CD8-positive, alpha-beta T cell (primary cell): ENCODE measurements at regions of chr15 and their contacts with region 1.

Region 1: DNA sequence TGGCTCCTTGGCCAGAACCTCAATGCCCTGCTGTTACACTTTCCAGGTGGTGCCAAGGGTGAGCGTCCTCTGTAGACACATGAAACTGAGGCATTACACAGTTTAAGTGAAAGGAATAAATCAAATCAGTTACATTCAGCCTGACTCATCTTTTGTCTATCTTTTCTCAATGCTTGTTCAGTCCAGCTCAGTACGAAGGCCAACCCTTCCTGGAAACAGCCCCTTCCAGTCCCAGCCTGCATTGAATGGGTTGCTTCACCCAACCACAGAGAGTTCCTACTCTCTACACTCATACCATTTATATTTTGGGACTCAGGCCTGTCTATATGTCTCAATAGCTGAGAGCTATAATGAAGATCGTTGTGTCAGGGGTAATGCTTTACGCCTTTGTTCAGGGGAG is 363.6 kb downstream of the RORA start:
- DNase-seq: no peak
- ATAC-seq: no peak
- H3K4me3 ChIP-seq: no peak overlapping the region
- H3K4me3 Mint-ChIP-seq: no peak overlapping the region
- H3K27ac ChIP-seq: no peak overlapping the region
- H3K27ac Mint-ChIP-seq: no peak overlapping the region
- H3K4me1 ChIP-seq: peaks cover 7% of the 10 kb centered on the region
- H3K4me1 Mint-ChIP-seq: peaks cover 26% of the 10 kb centered on the region
- H3K27me3 ChIP-seq: no peaks in the 10 kb centered on the region
- H3K27me3 Mint-ChIP-seq: no peaks in the 10 kb centered on the region
- CTCF ChIP-seq: no peak

Region 2: GRCh38 chr15:60580650-60581376 is 284.7 kb before region 1 on chr15:
- CTCF ChIA-PET with region 1: interaction called, 71 read pairs
- POLR2A ChIA-PET with region 1: interaction called, 9 read pairs
- intact Hi-C with region 1: loop called (anchors 1 to 2 kb)
- DNase-seq: peak in 6 of 9 experiments; percentile 33 to 91 (median 60)
- ATAC-seq: peak; percentile 74
- H3K4me3 ChIP-seq: peak overlapping the region; percentile 18 to 21
- H3K4me3 Mint-ChIP-seq: peak overlapping the region; percentile 74
- H3K27ac ChIP-seq: peak overlapping the region; percentile 35 to 85
- H3K27ac Mint-ChIP-seq: peak overlapping the region; percentile 95
- H3K4me1 ChIP-seq: peaks cover 91% of the 10 kb centered on the region
- H3K4me1 Mint-ChIP-seq: peaks cover 92% of the 10 kb centered on the region
- H3K27me3 ChIP-seq: no peaks in the 10 kb centered on the region
- H3K27me3 Mint-ChIP-seq: no peaks in the 10 kb centered on the region
- CTCF ChIP-seq: no peak

Region 3: GRCh38 chr15:60673918-60674558 is 191.5 kb before region 1 on chr15:
- CTCF ChIA-PET with region 1: interaction called, 27 read pairs
- POLR2A ChIA-PET with region 1: interaction called, 3 read pairs
- intact Hi-C with region 1: loop called in 1 of 2 experiments (anchors 2 kb)
- DNase-seq: peak in 2 of 9 experiments; percentile 15 to 22
- ATAC-seq: no peak
- H3K4me3 ChIP-seq: no peak overlapping the region
- H3K4me3 Mint-ChIP-seq: no peak overlapping the region
- H3K27ac ChIP-seq: no peak overlapping the region
- H3K27ac Mint-ChIP-seq: no peak overlapping the region
- H3K4me1 ChIP-seq: no peaks in the 10 kb centered on the region
- H3K4me1 Mint-ChIP-seq: peaks cover 2% of the 10 kb centered on the region
- H3K27me3 ChIP-seq: no peaks in the 10 kb centered on the region
- H3K27me3 Mint-ChIP-seq: no peaks in the 10 kb centered on the region
- CTCF ChIP-seq: no peak

Region 4: DNA sequence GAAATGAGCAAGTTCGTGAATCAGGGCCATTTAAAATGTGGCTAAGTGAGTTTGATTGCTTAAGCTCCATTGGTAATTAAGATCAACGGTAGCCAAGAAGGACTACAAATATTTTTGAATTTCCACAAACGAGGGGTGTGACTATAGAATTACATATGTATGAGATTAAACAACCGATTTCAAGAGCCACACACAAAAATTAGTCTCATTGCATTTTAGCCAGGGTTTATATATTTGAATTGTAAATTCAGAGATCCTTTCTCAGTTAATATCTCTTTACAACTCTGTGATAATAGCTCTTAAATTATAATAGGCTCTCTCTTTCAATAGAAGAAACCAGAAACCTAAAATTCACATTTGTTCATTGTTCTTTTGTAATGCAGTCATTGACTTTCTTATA is 61.0 kb before region 1 on chr15:
- CTCF ChIA-PET with region 1: no interaction called
- POLR2A ChIA-PET with region 1: no interaction called
- intact Hi-C with region 1: no loop called
- DNase-seq: no peak
- ATAC-seq: no peak
- H3K4me3 ChIP-seq: no peak overlapping the region
- H3K4me3 Mint-ChIP-seq: no peak overlapping the region
- H3K27ac ChIP-seq: no peak overlapping the region
- H3K27ac Mint-ChIP-seq: no peak overlapping the region
- H3K4me1 ChIP-seq: peaks cover 62% of the 10 kb centered on the region
- H3K4me1 Mint-ChIP-seq: peaks cover 67% of the 10 kb centered on the region
- H3K27me3 ChIP-seq: no peaks in the 10 kb centered on the region
- H3K27me3 Mint-ChIP-seq: no peaks in the 10 kb centered on the region
- CTCF ChIP-seq: no peak

Region 5: DNA sequence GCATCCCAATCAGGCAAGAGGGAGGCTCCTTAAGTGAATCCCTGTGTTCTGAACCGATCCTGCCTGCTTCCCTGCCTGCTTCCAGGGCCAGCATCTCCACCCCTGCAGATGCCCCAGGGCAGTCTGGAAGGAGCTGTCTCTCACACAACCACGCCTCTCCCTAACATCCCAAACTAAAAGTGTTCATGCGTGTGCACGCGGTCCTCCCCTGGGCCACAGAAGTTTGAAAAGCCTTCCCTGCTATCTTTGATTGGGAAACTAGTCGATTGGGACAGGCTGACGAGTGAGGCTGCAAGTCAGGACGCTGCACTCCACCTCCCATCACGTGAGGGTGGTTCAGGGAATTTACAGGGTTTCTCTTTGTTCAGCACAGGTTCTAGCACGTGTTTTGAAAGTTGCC is 45.6 kb before region 1 on chr15:
- CTCF ChIA-PET with region 1: no interaction called
- POLR2A ChIA-PET with region 1: no interaction called
- intact Hi-C with region 1: loop called in 1 of 2 experiments (anchors 10 kb)
- DNase-seq: no peak
- ATAC-seq: no peak
- H3K4me3 ChIP-seq: no peak overlapping the region
- H3K4me3 Mint-ChIP-seq: no peak overlapping the region
- H3K27ac ChIP-seq: no peak overlapping the region
- H3K27ac Mint-ChIP-seq: no peak overlapping the region
- H3K4me1 ChIP-seq: no peaks in the 10 kb centered on the region
- H3K4me1 Mint-ChIP-seq: peaks cover 12% of the 10 kb centered on the region
- H3K27me3 ChIP-seq: no peaks in the 10 kb centered on the region
- H3K27me3 Mint-ChIP-seq: no peaks in the 10 kb centered on the region
- CTCF ChIP-seq: no peak

Region 6: GRCh38 chr15:60850903-60851302 is 14.6 kb before region 1 on chr15:
- CTCF ChIA-PET with region 1: interaction called, 13 read pairs
- POLR2A ChIA-PET with region 1: no interaction called
- intact Hi-C with region 1: no loop called
- DNase-seq: no peak
- ATAC-seq: no peak
- H3K4me3 ChIP-seq: no peak overlapping the region
- H3K4me3 Mint-ChIP-seq: no peak overlapping the region
- H3K27ac ChIP-seq: no peak overlapping the region
- H3K27ac Mint-ChIP-seq: no peak overlapping the region
- H3K4me1 ChIP-seq: peaks cover 16% of the 10 kb centered on the region
- H3K4me1 Mint-ChIP-seq: peaks cover 54% of the 10 kb centered on the region
- H3K27me3 ChIP-seq: no peaks in the 10 kb centered on the region
- H3K27me3 Mint-ChIP-seq: no peaks in the 10 kb centered on the region
- CTCF ChIP-seq: no peak

Region 7: DNA sequence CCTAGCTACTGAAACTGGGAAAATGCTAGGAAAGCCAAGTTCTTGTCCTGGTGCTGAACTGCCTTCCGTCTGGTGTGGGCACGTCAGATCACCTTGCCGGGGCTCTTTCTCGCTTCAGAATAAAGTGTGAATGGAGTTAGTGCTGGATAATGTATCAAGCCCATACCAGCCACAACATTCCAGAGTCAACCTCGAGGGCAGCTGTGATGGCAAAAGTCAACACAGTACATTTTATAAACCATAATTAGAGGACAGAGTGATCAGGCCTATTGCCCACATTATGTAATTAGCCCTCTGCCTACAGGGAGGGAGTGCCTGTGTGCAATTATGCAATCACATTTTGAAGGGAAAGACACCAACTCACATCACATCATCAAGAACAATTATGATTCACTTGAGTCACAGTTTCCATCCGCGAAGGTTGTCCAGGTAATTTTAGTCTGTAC is 198.4 kb after region 1 on chr15:
- CTCF ChIA-PET with region 1: no interaction called
- POLR2A ChIA-PET with region 1: no interaction called
- intact Hi-C with region 1: no loop called
- DNase-seq: no peak
- ATAC-seq: no peak
- H3K4me3 ChIP-seq: no peak overlapping the region
- H3K4me3 Mint-ChIP-seq: no peak overlapping the region
- H3K27ac ChIP-seq: no peak overlapping the region
- H3K27ac Mint-ChIP-seq: no peak overlapping the region
- H3K4me1 ChIP-seq: no peaks in the 10 kb centered on the region
- H3K4me1 Mint-ChIP-seq: no peaks in the 10 kb centered on the region
- H3K27me3 ChIP-seq: no peaks in the 10 kb centered on the region
- H3K27me3 Mint-ChIP-seq: peaks cover 17% of the 10 kb centered on the region
- CTCF ChIP-seq: no peak